ENCODE measurements at regions of chr11 and their contacts with region 1.

Region 1: DNA sequence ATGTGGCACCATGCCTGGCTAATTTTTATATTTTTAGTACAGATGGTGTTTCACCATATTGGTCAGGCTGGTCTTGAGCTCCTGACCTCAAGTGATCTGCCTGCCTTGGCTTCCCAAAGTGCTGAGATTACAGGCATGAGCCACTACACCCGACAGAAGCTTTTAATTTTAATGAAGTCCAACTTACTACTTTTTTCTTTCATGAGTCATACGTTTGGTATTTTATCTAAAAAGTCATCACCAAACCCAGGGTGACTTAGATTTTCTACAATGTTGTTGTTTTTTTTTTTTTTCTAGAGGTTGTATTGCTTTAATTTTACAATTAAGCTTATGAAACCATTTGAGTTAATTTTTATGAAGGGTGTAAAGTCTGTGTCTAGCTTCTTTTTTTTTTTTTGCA is 34.9 kb downstream of the JRKL start:
- DNase-seq: no peak
- H3K4me3 Mint-ChIP-seq: no peak overlapping the region
- H3K27ac Mint-ChIP-seq: no peak overlapping the region
- H3K4me1 Mint-ChIP-seq: peaks cover 9% of the 10 kb centered on the region
- H3K27me3 Mint-ChIP-seq: peaks cover 42% of the 10 kb centered on the region

Region 2: DNA sequence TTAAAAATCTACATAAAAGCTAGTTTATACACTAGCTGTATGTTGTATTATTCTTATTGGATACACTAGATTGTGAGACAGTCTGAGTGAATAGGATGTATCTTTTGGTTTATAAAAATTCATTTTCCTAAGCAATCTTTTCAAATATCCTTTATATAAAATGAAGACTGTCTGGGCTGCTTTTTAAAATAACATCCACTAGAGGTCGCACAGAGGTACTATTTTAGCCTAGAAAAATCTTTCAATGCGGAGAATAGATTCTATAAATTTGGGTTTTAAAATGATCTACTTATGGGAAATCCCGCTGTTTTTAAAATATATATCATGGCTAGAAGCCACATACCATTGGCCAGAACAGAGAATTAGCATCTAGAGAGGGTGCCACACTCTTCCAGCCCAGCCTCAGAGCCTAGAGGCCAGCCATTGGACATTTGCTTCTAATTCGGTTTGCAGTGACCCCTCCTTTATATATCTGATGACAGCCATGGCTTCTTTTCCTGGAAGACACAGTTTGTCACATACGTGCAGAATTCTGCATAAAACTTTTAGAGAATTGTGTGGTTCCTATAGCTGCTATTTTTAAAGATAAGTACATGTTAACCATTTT is 1905.1 kb before region 1 on chr11:
- intact Hi-C with region 1: loop called (anchors 10 kb)
- DNase-seq: peak; percentile 67
- H3K4me3 Mint-ChIP-seq: no peak overlapping the region
- H3K27ac Mint-ChIP-seq: no peak overlapping the region
- H3K4me1 Mint-ChIP-seq: no peaks in the 10 kb centered on the region
- H3K27me3 Mint-ChIP-seq: peaks cover 31% of the 10 kb centered on the region

Region 3: DNA sequence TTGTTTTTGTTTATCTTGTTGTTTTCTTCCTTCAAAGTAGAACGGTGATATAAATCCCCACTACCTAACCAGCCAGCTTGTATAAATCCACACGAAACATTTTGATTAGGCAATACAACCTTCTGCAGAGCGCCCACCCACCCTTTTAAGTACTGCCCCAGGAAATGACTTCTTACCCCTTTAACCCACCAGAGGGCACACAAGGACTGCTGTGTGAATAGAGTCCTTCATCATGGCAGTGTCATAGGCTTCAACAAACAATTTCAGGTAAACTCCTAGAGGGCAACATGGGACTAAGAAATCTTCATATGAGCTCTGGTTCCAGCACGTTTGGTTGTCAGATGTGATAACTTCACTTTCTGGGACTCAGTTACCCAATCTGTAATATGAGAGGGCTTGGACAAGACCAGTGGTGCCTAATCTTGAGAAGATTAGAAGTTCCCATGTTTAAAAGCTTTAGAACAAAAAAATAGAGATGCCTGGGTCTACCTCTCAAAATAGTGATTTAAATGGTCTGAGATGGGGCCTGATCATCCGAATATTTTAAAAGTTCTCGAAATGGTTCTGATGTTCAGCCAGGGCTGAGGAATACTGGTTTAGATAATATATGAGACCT is 1801.5 kb before region 1 on chr11:
- intact Hi-C with region 1: loop called (anchors 2 kb)
- DNase-seq: peak; percentile 86
- H3K4me3 Mint-ChIP-seq: no peak overlapping the region
- H3K27ac Mint-ChIP-seq: no peak overlapping the region
- H3K4me1 Mint-ChIP-seq: no peaks in the 10 kb centered on the region
- H3K27me3 Mint-ChIP-seq: peaks cover 3% of the 10 kb centered on the region

Region 4: GRCh38 chr11:94786264-94787126 is 1638.2 kb before region 1 on chr11:
- intact Hi-C with region 1: loop called (anchors 10 kb)
- DNase-seq: peak; percentile 69
- H3K4me3 Mint-ChIP-seq: no peak overlapping the region
- H3K27ac Mint-ChIP-seq: no peak overlapping the region
- H3K4me1 Mint-ChIP-seq: no peaks in the 10 kb centered on the region
- H3K27me3 Mint-ChIP-seq: peaks cover 18% of the 10 kb centered on the region

Region 5: GRCh38 chr11:95790123-95790932 is 634.4 kb before region 1 on chr11 and contains the start of gene CEP57:
- intact Hi-C with region 1: loop called (anchors 2 kb)
- DNase-seq: peak; percentile 98
- H3K4me3 Mint-ChIP-seq: peak within 1 kb of the TSS; percentile 98
- H3K27ac Mint-ChIP-seq: peak within 1 kb of the TSS; percentile 100
- H3K4me1 Mint-ChIP-seq: peaks cover 45% of the 10 kb centered on the region
- H3K27me3 Mint-ChIP-seq: no peaks in the 10 kb centered on the region
- total RNA-seq, gene CEP57: 75.7 and 87.6 TPM in 2 replicates

Region 6: GRCh38 chr11:95835768-95836488 is 588.8 kb before region 1 on chr11:
- intact Hi-C with region 1: loop called (anchors 1 kb)
- DNase-seq: peak; percentile 87
- H3K4me3 Mint-ChIP-seq: no peak overlapping the region
- H3K27ac Mint-ChIP-seq: no peak overlapping the region
- H3K4me1 Mint-ChIP-seq: no peaks in the 10 kb centered on the region
- H3K27me3 Mint-ChIP-seq: no peaks in the 10 kb centered on the region

Region 7: GRCh38 chr11:95849087-95849825 is 575.4 kb before region 1 on chr11:
- intact Hi-C with region 1: loop called (anchors 1 kb)
- DNase-seq: peak; percentile 70
- H3K4me3 Mint-ChIP-seq: no peak overlapping the region
- H3K27ac Mint-ChIP-seq: no peak overlapping the region
- H3K4me1 Mint-ChIP-seq: no peaks in the 10 kb centered on the region
- H3K27me3 Mint-ChIP-seq: no peaks in the 10 kb centered on the region

Region 8: GRCh38 chr11:96361778-96362177 is 62.9 kb before region 1 on chr11:
- intact Hi-C with region 1: no loop called
- DNase-seq: peak; percentile 1
- H3K4me3 Mint-ChIP-seq: no peak overlapping the region
- H3K27ac Mint-ChIP-seq: no peak overlapping the region
- H3K4me1 Mint-ChIP-seq: peaks cover 22% of the 10 kb centered on the region
- H3K27me3 Mint-ChIP-seq: no peaks in the 10 kb centered on the region

Region 9: DNA sequence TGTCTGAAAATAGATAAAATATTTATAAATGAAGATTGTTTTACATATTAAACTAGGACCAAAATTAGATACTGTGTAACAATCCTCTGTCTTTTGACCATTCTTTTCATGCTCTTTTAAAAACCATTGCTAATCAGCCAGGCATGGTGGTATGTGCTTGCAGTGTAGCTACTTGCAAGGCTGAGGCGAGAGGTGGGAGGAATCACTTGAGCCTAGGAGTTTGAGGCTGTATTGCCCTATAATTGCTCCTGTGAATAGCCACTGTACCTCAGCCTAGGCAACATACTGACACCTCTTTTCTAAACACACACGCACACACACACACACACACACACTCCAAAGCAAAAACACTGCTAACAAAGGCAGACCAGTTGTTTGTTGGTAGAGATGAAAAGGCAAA is 224.3 kb after region 1 on chr11:
- intact Hi-C with region 1: no loop called
- DNase-seq: no peak
- H3K4me3 Mint-ChIP-seq: no peak overlapping the region
- H3K27ac Mint-ChIP-seq: no peak overlapping the region
- H3K4me1 Mint-ChIP-seq: no peaks in the 10 kb centered on the region
- H3K27me3 Mint-ChIP-seq: no peaks in the 10 kb centered on the region